Heart left ventricle (tissue), 16 donors: ENCODE measurements at regions of chr1 and their contacts with region 1.

Region 1: GRCh38 chr1:110524311-110525251 is 5.6 kb upstream of the KCNA10 start:
- DNase-seq: peak in 2 of 5 donors; percentile 33 to 40
- ATAC-seq: peak in 3 of 4 donors; percentile 52 to 72 (median 71)
- H3K4me3 ChIP-seq: peak overlapping the region in 1 of 12 donors; percentile 19
- H3K27ac ChIP-seq: no peak overlapping the region
- H3K4me1 ChIP-seq: peaks cover 0 to 9% (median 0%) of the 10 kb centered on the region in 12 donors
- H3K27me3 ChIP-seq: peaks cover 0 to 67% (median 17%) of the 10 kb centered on the region in 9 donors
- CTCF ChIP-seq: peak; percentile 46 to 74 (median 64)
- POLR2A ChIP-seq: no peak

Region 2: GRCh38 chr1:109877320-109877771 is 647.2 kb before region 1 on chr1:
- intact Hi-C with region 1: no loop called
- DNase-seq: peak; percentile 57 to 84 (median 65)
- ATAC-seq: peak; percentile 65 to 94 (median 90)
- H3K4me3 ChIP-seq: peak overlapping the region in 2 of 12 donors; percentile 2 to 13
- H3K27ac ChIP-seq: peak overlapping the region; percentile 62 to 86 (median 80)
- H3K4me1 ChIP-seq: peaks cover 0 to 50% (median 20%) of the 10 kb centered on the region in 12 donors
- H3K27me3 ChIP-seq: no peaks in the 10 kb centered on the region
- CTCF ChIP-seq: peak in 8 of 12 donors; percentile 8 to 44 (median 25)
- POLR2A ChIP-seq: no peak

Region 3: DNA sequence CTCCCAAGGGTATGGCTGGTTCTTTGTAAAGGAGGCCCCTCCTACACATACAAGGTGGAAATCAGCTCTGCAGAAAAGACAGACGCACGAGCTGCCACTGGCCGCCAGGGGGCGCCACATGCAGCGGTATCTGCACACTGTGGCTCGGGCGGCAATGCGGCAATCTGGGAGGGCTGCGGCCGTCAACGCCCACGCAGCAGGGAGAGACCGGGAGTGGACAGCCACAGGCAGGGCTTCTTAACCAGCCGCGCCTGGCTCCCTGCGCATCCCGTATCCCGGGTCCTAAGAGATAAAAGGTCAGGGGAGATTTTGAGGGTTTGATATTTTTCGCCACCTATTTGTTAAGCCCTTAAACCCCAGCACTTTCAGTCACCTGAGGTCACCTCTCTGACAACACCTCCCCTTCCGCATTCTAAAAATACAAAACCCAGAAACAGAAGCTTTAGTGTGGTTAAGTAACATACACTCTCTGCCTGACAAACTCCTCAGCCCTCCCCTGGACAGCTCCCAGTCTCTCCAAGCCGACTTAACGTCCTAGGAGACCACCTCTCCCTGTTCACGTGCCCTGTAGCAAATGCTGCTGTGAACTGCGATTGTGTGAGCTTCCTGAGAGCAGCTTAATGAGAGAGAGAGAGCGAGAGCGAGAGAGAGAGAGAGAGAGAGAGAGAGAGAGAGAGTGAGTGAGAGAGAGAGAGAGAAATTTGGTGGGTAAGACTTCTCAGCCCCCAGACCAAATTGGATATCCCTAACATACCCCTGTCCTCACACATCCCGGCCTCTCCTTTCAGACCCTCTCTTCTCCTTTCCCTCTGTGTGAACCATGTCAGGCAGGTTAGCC is 95.0 kb after region 1 on chr1:
- intact Hi-C with region 1: loop called (anchors 1 to 2 kb)
- DNase-seq: peak; percentile 82 to 93 (median 87)
- ATAC-seq: peak; percentile 60 to 92 (median 89)
- H3K4me3 ChIP-seq: peak overlapping the region in 4 of 12 donors; percentile 14 to 50 (median 26)
- H3K27ac ChIP-seq: no peak overlapping the region
- H3K4me1 ChIP-seq: peaks cover 0 to 17% (median 7%) of the 10 kb centered on the region in 12 donors
- H3K27me3 ChIP-seq: peaks cover 0 to 44% (median 21%) of the 10 kb centered on the region in 9 donors
- CTCF ChIP-seq: peak; percentile 80 to 98 (median 94)
- POLR2A ChIP-seq: no peak

Region 4: GRCh38 chr1:110686188-110686587 is 161.6 kb after region 1 on chr1:
- intact Hi-C with region 1: no loop called
- DNase-seq: no peak
- ATAC-seq: no peak
- H3K4me3 ChIP-seq: no peak overlapping the region
- H3K27ac ChIP-seq: no peak overlapping the region
- H3K4me1 ChIP-seq: no peaks in the 10 kb centered on the region
- H3K27me3 ChIP-seq: peaks cover 0 to 19% (median 4%) of the 10 kb centered on the region in 9 donors
- CTCF ChIP-seq: no peak
- POLR2A ChIP-seq: no peak

Region 5: GRCh38 chr1:110766025-110766647 is 241.6 kb after region 1 on chr1:
- intact Hi-C with region 1: loop called in 2 of 10 experiments (anchors 10 kb)
- DNase-seq: peak in 3 of 5 donors; percentile 27 to 42 (median 32)
- ATAC-seq: peak in 2 of 4 donors; percentile 53 to 65
- H3K4me3 ChIP-seq: no peak overlapping the region
- H3K27ac ChIP-seq: no peak overlapping the region
- H3K4me1 ChIP-seq: peaks cover 0 to 4% (median 0%) of the 10 kb centered on the region in 12 donors
- H3K27me3 ChIP-seq: peaks cover 0 to 24% (median 2%) of the 10 kb centered on the region in 9 donors
- CTCF ChIP-seq: peak; percentile 68 to 91 (median 84)
- POLR2A ChIP-seq: no peak

Region 6: GRCh38 chr1:110780600-110781484 is 256.3 kb after region 1 on chr1:
- intact Hi-C with region 1: loop called in 9 of 10 experiments (anchors 5 to 10 kb)
- DNase-seq: peak in 4 of 5 donors; percentile 46 to 62 (median 55)
- ATAC-seq: peak in 3 of 4 donors; percentile 47 to 72 (median 69)
- H3K4me3 ChIP-seq: no peak overlapping the region
- H3K27ac ChIP-seq: no peak overlapping the region
- H3K4me1 ChIP-seq: peaks cover 0 to 17% (median 0%) of the 10 kb centered on the region in 12 donors
- H3K27me3 ChIP-seq: peaks cover 0 to 31% (median 3%) of the 10 kb centered on the region in 9 donors
- CTCF ChIP-seq: peak; percentile 73 to 90 (median 80)
- POLR2A ChIP-seq: no peak